Heart left ventricle (tissue), 16 donors: ENCODE measurements at regions of chr2 and their contacts with region 1.

Region 1: DNA sequence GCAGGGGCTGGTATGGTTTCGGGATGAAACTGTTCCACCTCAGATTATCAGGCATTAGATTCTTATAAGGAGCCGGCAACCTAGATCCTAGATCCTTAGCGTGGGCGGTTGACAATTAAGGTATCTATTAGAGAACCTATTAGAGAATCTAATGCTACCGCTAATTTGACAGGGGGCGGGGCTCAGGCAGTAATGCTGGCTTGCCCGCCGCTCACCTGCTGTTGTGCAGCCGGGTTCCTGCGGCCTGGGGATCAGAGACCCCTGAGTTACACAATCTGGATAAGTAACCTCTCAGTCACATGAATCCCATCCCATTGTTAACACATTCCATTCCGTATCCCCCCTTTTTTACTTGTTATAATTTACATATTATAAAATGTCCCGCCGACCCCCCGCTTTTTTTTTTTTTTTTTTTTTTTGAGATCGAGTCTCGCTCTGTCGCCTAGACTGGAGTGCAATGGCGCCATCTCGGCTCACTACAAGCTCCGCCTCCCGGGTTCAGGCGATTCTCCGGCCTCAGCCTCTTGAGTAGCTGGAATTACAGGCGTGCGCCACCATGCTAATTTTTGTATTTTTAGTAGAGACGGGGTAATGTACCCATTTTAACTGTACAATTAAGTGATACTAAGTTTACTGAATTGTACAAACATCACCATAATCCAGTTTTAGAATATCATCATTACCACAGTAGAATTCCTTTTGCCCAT is 42.0 kb upstream of the GPD2 start:
- DNase-seq: no peak
- ATAC-seq: no peak
- H3K4me3 ChIP-seq: no peak overlapping the region
- H3K27ac ChIP-seq: no peak overlapping the region
- H3K4me1 ChIP-seq: peaks cover 0 to 1% (median 0%) of the 10 kb centered on the region in 12 donors
- H3K27me3 ChIP-seq: peaks cover 0 to 9% (median 0%) of the 10 kb centered on the region in 9 donors
- CTCF ChIP-seq: no peak
- POLR2A ChIP-seq: no peak

Region 2: DNA sequence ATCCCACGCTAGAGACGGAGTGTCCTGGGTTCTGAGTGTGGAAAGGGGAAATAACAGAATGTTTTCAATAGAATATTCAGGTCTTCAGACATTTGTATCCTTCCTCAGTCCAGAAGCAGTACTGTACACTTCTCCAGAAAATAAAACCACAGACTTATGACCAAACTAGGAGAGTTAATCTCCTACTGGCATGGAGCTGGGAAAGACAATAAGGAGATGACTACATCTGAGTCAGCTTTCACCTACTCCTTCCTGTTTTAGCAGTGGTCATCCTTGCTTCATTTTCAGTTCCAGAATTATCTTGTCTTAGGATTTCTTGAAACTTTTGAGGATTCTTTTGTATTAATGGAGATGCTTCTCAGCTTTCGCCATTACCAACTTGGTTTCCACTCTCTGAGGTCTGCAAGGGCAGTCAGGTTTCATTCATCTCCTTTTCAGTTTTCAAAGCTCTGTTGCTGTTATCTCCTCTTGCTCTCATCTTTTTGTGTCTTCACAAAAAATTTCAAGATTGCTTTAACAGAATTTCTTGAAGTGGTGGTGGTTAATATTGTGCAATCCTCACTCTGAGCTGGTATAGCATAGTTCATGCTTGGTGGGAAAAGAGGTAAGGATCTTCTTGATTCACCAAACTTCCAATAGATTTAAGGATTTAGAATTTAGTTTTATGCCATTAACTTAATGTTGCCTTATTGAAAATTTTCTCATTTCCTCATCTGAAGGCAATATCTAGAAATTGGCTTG is 38.0 kb before region 1 on chr2:
- intact Hi-C with region 1: loop called in 1 of 10 experiments (anchors 5 kb)
- DNase-seq: no peak
- ATAC-seq: no peak
- H3K4me3 ChIP-seq: no peak overlapping the region
- H3K27ac ChIP-seq: no peak overlapping the region
- H3K4me1 ChIP-seq: no peaks in the 10 kb centered on the region
- H3K27me3 ChIP-seq: no peaks in the 10 kb centered on the region
- CTCF ChIP-seq: no peak
- POLR2A ChIP-seq: no peak